ENCODE measurements at regions of chr1 and their contacts with region 1.

Region 1: GRCh38 chr1:88180449-88181108 is 503.5 kb upstream of the PKN2 start:
- DNase-seq: peak; percentile 53
- ATAC-seq: peak; percentile 94

Region 2: DNA sequence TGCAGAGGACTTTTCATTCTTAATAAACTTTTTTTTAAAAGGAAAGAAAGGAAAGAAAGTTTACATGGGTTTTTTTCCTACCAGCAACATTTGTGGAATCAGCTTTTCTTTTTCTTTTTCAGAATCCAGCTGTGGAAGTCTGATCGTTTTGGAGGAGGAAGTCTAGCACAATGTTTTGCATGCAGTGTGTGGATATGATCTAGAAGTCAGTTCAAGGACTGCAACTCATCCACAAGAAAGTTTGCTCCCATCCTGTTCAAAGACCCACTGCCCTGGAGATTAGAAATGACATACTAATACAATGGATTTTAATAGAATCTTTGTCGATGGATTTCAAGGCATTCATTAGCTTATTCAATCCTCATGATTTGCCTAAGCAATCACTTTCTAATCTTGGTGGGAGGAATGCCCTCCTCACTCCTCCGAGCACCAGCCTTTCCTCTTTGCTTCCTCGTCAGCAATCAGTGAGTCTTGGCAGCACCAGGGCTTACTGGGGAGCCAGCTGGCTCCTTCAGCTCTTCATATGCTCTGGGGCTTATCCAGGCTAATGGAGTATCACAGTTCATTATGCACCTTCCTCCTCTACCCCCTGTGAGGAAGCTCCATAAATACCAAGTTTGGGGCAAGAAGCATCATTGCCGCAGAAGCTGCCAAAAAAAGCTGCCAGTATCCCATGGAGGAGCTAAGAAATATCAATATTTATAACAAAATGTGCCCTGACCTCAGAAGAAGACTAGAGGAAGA is 111.2 kb after region 1 on chr1:
- intact Hi-C with region 1: loop called (anchors 10 kb)
- DNase-seq: no peak
- ATAC-seq: no peak

Region 3: GRCh38 chr1:88549536-88549935 is 369.0 kb after region 1 on chr1:
- intact Hi-C with region 1: loop called (anchors 5 kb)
- DNase-seq: no peak
- ATAC-seq: no peak